Mucosa of descending colon (tissue), 3 donors: ENCODE measurements at regions of chr16 and their contacts with region 1.

Region 1: GRCh38 chr16:84726079-84726668 is 26.4 kb downstream of the USP10 start:
- DNase-seq: peak; percentile 92 to 98 (median 92)
- ATAC-seq: peak; percentile 92
- H3K4me3 ChIP-seq: no peak overlapping the region
- H3K4me1 ChIP-seq: peaks cover 50% of the 10 kb centered on the region
- CTCF ChIP-seq: peak; percentile 78

Region 2: DNA sequence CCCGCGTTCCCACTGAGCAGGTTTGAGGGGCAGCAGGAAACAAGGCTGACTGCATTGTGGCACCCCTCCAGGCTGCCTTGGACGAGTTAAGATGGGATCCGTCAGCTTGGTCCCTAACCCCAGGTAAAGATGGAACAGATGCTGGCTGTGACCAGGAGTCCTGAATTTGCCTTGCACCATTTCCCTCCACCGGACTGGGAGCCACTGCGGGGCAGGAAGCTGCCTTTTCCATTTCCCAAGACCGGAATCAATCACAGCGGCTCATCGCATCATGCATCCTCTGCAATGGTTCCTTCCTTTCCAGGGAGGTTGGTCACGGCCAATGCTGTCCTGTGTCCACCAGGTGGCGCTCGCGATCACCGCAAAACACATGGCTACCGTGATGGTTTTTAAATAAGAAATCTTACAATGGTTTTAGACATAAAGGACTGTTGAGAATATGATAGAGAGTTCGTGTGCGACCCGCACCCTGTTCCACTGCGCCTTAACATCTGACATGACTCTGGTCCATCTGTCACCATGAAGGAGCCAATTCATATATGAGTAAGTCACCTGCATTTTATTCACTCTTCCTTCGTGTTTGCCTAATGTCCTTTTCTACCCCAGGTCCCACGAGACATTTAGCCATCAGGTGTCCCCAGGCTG is 214.9 kb before region 1 on chr16:
- intact Hi-C with region 1: loop called in 1 of 2 experiments (anchors 10 kb)
- DNase-seq: peak; percentile 87 to 90 (median 88)
- ATAC-seq: peak; percentile 84
- H3K4me3 ChIP-seq: no peak overlapping the region
- H3K4me1 ChIP-seq: peaks cover 12% of the 10 kb centered on the region
- CTCF ChIP-seq: peak; percentile 89

Region 3: GRCh38 chr16:84629580-84629979 is 96.6 kb before region 1 on chr16:
- intact Hi-C with region 1: loop called in 1 of 2 experiments (anchors 10 kb)
- DNase-seq: no peak
- ATAC-seq: no peak
- H3K4me3 ChIP-seq: no peak overlapping the region
- H3K4me1 ChIP-seq: no peaks in the 10 kb centered on the region
- CTCF ChIP-seq: no peak

Region 4: GRCh38 chr16:84672276-84673202 is 53.6 kb before region 1 on chr16:
- intact Hi-C with region 1: loop called (anchors 5 kb)
- DNase-seq: peak; percentile 79 to 89 (median 85)
- ATAC-seq: peak; percentile 93
- H3K4me3 ChIP-seq: no peak overlapping the region
- H3K4me1 ChIP-seq: no peaks in the 10 kb centered on the region
- CTCF ChIP-seq: peak; percentile 87

Region 5: DNA sequence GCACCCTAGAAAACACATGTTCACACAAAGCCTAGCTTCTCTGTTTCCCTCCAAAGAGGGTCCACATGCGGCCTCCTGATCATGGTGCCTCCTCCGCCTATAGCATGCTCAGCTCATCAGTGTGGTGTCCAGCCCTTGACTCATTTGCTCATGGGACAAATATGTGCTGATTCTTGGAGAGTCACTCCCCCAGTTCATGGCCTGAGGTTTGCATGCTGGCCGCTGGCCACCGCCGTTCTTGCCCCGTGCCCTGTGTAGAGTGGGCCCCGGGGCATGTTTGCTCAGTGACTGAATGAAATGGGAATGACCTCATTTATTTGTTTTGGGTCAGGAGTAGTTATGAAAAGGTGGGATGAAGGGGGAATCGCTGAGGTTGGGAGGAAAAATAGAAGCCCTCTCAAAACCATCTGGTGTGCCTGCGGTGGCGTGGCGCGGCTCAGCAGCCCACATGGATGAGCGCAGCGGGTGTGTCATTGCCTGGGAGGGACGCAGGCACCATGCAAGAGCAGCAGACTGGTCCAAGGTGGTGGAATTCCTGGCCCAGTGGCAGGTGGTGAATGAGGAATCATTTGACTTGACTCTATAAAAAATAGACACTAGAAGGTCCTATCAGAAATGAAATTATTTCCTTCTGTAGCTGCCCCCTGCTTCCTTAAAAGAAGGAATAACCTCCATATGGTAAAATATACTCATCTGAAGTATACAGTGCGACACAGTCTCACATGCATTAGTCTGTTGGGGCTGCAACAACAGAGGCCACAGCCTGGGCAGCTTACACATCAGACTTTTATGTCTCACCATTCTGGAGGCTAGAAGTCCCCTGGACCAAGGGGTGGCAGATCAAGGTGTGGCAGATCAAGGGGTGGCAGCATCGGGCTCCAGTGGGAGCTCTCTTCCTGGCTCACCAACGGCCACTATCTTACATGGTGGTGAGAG is 125.3 kb after region 1 on chr16:
- intact Hi-C with region 1: no loop called
- DNase-seq: no peak
- ATAC-seq: peak; percentile 34
- H3K4me3 ChIP-seq: no peak overlapping the region
- H3K4me1 ChIP-seq: no peaks in the 10 kb centered on the region
- CTCF ChIP-seq: no peak

Region 6: DNA sequence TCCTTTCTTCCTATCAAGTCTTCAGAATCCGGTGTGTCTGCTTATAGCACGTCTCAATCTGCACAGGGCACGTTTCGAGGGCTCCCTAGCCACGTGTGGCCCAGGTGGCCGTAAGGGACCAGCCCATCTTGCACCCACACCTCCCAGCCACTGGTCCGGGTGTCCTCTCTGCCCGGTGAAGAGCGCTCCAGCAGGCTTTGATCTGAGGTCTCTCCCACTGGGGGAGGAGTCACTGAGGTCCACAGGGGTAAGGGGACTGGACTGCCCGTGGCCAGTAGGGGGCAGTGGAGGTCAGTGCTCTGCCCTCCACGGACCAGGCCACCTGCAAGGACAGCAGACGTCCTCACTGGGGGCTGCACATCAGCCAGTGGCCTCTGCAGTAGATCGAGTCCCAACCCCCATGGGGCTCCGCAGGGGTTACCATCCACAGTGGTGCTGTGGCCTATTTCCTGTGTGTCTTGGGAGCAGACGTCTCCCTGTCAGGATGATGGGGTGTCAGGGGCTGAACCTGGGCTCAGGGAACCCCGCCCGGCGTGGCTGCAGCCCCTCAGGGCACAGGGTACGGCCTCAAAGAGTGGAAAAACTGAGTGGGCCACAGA is 590.2 kb after region 1 on chr16:
- intact Hi-C with region 1: no loop called
- DNase-seq: peak; percentile 41 to 81 (median 75)
- ATAC-seq: peak; percentile 92
- H3K4me3 ChIP-seq: no peak overlapping the region
- H3K4me1 ChIP-seq: peaks cover 4% of the 10 kb centered on the region
- CTCF ChIP-seq: peak; percentile 87